ENCODE measurements at regions of chr17 and their contacts with region 1.

Region 1: DNA sequence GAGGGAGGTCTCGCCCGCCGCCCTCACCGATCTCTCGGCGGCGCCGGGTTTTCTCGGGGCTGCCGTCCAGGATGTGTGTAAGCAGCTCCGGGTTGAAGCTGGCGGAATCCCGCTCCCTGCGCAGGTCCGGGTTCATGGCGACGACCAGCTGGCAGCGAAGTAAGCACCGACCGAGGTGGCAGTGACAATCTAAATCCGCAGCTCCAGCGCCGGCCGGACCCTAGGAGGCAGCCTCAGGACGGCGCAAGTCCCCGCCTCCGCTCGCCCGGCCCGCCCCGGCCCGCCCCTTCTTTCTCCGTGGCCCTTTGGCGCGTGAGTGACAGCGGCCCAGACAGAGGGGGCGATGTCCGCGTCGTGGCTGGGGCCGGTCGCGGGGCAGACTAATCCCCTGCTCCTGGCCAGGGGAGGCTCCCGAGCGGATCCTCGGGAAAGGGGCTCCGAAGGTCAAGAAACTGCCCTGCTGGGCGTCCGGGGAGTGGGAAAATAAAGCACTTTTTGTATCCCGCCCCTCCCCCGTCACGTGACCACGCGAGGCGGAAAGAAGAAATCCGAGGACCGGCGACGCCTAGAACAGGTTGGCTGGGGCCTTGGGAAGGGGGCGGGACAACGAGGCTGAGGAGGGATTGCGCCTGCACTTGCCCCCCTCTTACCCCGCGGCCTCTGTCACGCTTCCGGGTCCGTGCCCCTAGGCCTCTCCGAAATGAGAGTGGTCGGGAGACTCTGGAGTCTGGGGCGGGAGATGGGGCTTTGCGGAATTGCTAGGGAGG is at the starts of genes ACOX1 and TEN1:
- H3K4me3 Mint-ChIP-seq: peak within 1 kb of the TSS; percentile 83
- H3K27ac Mint-ChIP-seq: peak within 1 kb of the TSS; percentile 97
- H3K4me1 Mint-ChIP-seq: peaks cover 59% of the 10 kb centered on the region
- H3K27me3 Mint-ChIP-seq: no peaks in the 10 kb centered on the region

Region 2: DNA sequence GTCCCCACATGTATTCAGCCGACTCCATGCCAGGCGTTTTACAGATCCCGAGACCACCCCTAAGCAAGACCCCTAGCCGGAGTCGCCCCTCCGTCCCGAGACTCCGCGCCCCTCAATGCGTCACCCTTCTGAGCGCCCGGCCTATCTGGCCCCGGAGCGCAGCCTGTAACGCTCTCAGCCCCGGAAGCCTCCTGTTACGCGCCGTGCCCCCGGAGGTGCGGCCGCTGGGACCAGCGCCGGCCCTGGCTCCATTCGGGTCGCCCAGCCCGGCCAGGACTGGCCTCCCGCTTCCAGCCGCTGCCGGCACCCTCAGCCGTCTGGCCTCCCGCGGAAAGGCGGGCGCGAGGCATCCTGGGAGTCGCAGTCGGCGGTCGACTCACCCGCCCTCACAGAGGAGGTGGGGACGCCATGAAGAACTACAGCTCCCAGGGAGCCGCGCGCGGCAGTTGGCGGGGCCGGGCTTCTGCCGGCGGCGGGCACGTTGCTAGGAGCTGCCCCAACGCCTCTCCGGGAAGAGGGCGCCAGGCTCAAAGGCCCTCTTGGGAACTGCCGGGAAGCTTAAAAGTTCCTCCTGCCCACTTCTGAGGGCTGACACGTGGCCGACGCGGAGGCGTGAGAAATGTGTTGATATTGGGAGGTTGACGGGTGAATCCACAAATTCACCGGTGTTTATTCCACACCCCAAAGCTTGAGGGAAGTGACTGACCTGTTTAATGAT is 38.2 kb before region 1 on chr17 and contains the start of gene FBF1:
- intact Hi-C with region 1: loop called (anchors 1 kb)
- H3K4me3 Mint-ChIP-seq: peak within 1 kb of the TSS; percentile 78
- H3K27ac Mint-ChIP-seq: peak within 1 kb of the TSS; percentile 80
- H3K4me1 Mint-ChIP-seq: peaks cover 16% of the 10 kb centered on the region
- H3K27me3 Mint-ChIP-seq: peaks cover 2% of the 10 kb centered on the region

Region 3: DNA sequence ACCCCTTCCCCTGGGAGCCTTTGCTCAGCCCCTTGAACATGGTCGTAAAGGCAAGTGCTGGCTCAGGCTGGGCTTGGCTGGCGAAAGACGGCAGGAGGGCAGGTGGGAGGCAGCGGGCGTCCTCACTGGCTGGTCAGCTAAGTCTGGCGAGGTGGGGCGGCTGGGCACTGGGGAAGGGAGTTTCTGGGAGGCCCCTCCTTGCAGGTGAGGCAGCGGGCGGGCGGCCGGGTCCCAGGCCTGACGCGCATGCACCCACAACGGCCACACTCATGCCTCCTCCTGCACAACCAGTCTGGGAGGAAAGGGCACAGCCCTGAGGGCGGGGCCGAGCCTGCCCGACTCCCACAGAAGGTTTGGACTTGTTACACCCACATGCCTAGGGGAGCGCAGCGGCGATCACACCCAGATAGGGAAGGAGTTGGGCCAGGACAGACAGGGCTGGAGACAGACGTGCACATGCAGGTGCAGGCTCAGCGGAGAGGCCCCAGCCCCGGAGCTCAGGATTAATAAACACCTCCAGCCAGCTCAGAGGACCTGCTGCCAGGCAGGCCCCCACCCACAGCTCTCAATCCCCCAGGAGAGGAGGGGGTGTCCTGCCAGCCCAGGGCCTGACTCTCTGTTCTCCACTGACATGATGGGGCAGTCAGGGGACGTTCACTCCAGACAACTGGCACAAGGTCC is 48.2 kb after region 1 on chr17 and contains the start of gene EVPL:
- intact Hi-C with region 1: no loop called
- H3K4me3 Mint-ChIP-seq: no peak within 1 kb of the TSS
- H3K27ac Mint-ChIP-seq: no peak within 1 kb of the TSS
- H3K4me1 Mint-ChIP-seq: peaks cover 9% of the 10 kb centered on the region
- H3K27me3 Mint-ChIP-seq: peaks cover 26% of the 10 kb centered on the region

Region 4: GRCh38 chr17:76039121-76039520 is 60.0 kb after region 1 on chr17:
- intact Hi-C with region 1: no loop called
- H3K4me3 Mint-ChIP-seq: no peak overlapping the region
- H3K27ac Mint-ChIP-seq: no peak overlapping the region
- H3K4me1 Mint-ChIP-seq: no peaks in the 10 kb centered on the region
- H3K27me3 Mint-ChIP-seq: no peaks in the 10 kb centered on the region

Region 5: DNA sequence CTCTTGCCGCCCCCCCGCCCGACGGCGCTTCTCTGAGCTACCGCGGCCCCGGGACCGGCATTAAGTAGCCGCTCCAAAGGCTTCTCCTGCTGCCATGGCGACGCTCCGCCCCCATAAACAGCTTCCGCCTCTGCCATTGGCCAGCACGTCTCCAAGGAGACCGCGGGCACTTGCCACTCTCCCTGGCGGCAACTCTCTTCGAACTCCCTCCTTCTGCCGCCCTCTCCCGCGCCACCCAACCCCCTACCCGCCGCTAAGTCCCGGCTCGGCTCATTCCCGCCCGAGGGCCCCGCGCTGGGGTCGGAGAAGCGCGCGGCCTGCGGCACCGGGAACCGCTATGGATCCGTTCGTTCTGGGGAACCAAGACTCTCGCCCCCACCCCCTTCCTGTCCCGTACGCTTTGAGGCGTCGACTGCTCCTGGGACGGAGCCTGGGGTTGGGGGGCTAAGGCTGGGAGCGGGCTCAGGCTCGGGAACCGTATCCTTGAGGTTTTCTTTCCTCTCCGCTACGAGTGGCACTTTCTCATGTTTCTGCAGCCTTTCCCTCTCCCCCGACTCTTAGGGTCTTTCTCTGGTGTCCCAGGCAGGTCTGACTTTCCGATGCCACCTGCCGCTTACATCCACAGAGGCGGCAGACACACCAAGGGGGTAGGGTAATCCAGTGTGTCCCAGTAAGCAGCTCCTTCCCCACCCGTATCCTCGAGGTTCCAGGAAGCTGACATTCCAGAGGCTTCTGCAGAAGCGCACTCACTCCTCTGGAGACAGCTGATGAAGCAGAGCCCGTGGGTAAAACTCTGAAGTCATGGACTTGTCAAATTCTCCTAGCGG is 162.3 kb after region 1 on chr17 and contains the start of gene FOXJ1:
- intact Hi-C with region 1: no loop called
- H3K4me3 Mint-ChIP-seq: peak within 1 kb of the TSS; percentile 78
- H3K27ac Mint-ChIP-seq: peak within 1 kb of the TSS; percentile 37
- H3K4me1 Mint-ChIP-seq: peaks cover 57% of the 10 kb centered on the region
- H3K27me3 Mint-ChIP-seq: peaks cover 65% of the 10 kb centered on the region